Natural killer cell (primary cell): ENCODE measurements at regions of chr4 and their contacts with region 1.

Region 1: DNA sequence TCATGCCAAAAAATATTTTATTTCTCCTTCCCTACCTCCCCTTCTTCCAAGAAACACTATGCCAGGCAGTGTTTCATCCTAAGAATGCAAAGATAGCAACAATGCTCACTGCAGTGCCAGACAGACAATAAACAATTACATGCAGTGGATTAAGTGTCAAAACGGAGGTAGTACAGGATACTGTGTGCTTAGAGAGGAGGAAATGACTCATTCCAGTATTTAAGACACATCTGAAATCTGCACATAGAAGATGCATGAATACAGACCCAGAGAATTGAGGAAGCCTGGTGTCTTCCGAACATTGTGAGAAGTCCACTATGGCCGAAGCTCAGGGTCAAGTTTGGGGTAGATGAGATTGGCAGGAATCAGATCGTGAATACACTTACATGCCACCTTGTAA is 326.4 kb downstream of the PPP3CA start:
- DNase-seq: peak in 1 of 2 donors; percentile 67
- ATAC-seq: peak; percentile 71 to 91 (median 77)
- H3K4me3 ChIP-seq: no peak overlapping the region
- H3K4me3 Mint-ChIP-seq: peak overlapping the region; percentile 52
- H3K27ac ChIP-seq: peak overlapping the region; percentile 72
- H3K27ac Mint-ChIP-seq: peak overlapping the region; percentile 87 to 93
- H3K4me1 ChIP-seq: peaks cover 28% of the 10 kb centered on the region
- H3K4me1 Mint-ChIP-seq: peaks cover 49 to 59% of the 10 kb centered on the region in 2 donors
- H3K27me3 ChIP-seq: no peaks in the 10 kb centered on the region
- H3K27me3 Mint-ChIP-seq: no peaks in the 10 kb centered on the region
- CTCF ChIP-seq: no peak

Region 2: DNA sequence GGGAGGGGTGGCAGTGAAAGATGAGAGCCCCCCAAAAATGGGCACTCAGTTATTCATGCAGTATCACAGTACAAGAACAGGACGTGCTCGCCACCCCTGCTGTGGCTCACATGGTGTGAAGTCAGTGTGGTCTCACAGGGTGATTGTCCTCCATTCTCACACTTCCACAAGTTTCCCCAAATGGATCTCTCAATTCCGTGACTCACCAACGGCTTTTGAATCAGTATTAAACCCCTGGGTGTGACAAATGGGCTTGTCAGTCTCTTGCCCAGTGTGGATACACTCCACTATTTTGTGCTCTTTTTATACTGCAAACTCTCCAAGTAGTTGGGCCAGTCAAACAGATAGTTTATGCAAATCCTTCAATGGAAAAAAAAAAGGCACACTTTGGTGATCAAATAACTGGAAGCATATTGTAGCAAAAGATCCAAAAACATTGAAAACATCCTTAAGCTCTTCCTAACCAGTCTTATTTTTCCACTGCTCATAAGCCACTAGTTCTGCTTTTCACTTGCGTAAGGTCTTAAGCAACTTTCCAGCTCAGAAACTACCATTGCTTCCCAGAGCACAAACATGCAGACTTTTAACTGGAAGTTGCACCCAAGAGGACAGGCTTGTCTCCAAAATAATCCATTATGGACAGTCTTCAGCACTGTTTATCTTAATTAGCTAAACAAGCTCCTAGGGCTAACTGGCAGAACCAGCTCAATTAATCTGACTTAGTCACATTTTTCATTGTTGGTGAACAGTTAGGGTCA is 39.3 kb before region 1 on chr4:
- intact Hi-C with region 1: loop called (anchors 5 kb)
- DNase-seq: no peak
- ATAC-seq: peak; percentile 67 to 78 (median 78)
- H3K4me3 ChIP-seq: no peak overlapping the region
- H3K4me3 Mint-ChIP-seq: peak overlapping the region; percentile 7
- H3K27ac ChIP-seq: no peak overlapping the region
- H3K27ac Mint-ChIP-seq: peak overlapping the region in 1 of 2 donors; percentile 72
- H3K4me1 ChIP-seq: no peaks in the 10 kb centered on the region
- H3K4me1 Mint-ChIP-seq: peaks cover 23% of the 10 kb centered on the region in 2 donors
- H3K27me3 ChIP-seq: no peaks in the 10 kb centered on the region
- H3K27me3 Mint-ChIP-seq: peaks cover 0 to 2% of the 10 kb centered on the region in 2 donors
- CTCF ChIP-seq: no peak

Region 3: GRCh38 chr4:101039367-101039766 is 18.4 kb after region 1 on chr4:
- intact Hi-C with region 1: loop called (anchors 1 kb)
- DNase-seq: peak in 1 of 2 donors; percentile 73
- ATAC-seq: peak; percentile 58 to 71 (median 67)
- H3K4me3 ChIP-seq: no peak overlapping the region
- H3K4me3 Mint-ChIP-seq: peak overlapping the region; percentile 75
- H3K27ac ChIP-seq: no peak overlapping the region
- H3K27ac Mint-ChIP-seq: peak overlapping the region; percentile 34 to 77
- H3K4me1 ChIP-seq: peaks cover 18% of the 10 kb centered on the region
- H3K4me1 Mint-ChIP-seq: peaks cover 47 to 48% of the 10 kb centered on the region in 2 donors
- H3K27me3 ChIP-seq: no peaks in the 10 kb centered on the region
- H3K27me3 Mint-ChIP-seq: no peaks in the 10 kb centered on the region
- CTCF ChIP-seq: no peak

Region 4: GRCh38 chr4:101527188-101527587 is 506.2 kb after region 1 on chr4:
- intact Hi-C with region 1: no loop called
- DNase-seq: peak; percentile 51 to 88
- ATAC-seq: peak; percentile 95 to 98 (median 97)
- H3K4me3 ChIP-seq: no peak overlapping the region
- H3K4me3 Mint-ChIP-seq: peak overlapping the region; percentile 1
- H3K27ac ChIP-seq: no peak overlapping the region
- H3K27ac Mint-ChIP-seq: peak overlapping the region; percentile 56 to 71
- H3K4me1 ChIP-seq: no peaks in the 10 kb centered on the region
- H3K4me1 Mint-ChIP-seq: peaks cover 13 to 20% of the 10 kb centered on the region in 2 donors
- H3K27me3 ChIP-seq: peaks cover 28% of the 10 kb centered on the region
- H3K27me3 Mint-ChIP-seq: peaks cover 50 to 55% of the 10 kb centered on the region in 2 donors
- CTCF ChIP-seq: no peak